ENCODE measurements at regions of chr3 and their contacts with region 1.

Region 1: GRCh38 chr3:40452876-40453730 is 4.0 kb upstream of the RPL14 start:
- DNase-seq: peak; percentile 99 to 100 (median 99)
- ATAC-seq: peak; percentile 95
- H3K4me3 ChIP-seq: peak overlapping the region; percentile 57
- H3K27ac ChIP-seq: peak overlapping the region; percentile 86
- H3K4me1 ChIP-seq: peaks cover 8 to 13% of the 10 kb centered on the region in 2 experiments; a peak in 4 of 5 replicates
- H3K27me3 ChIP-seq: no peaks in the 10 kb centered on the region
- CTCF ChIP-seq: peak in 2 of 3 experiments; percentile 9 to 33; a peak in 2 of 6 replicates
- EP300 ChIP-seq: no peak; the same call in 1 of the 2 replicates
- POLR2A ChIP-seq: peak; percentile 95
- RAD21 ChIP-seq: peak; percentile 39 to 55

Region 2: GRCh38 chr3:39383045-39383880 is 1069.8 kb before region 1 on chr3 and contains the start of gene SLC25A38:
- CTCF ChIA-PET with region 1: no interaction called
- POLR2A ChIA-PET with region 1: no interaction called
- in situ Hi-C with region 1: no loop called
- intact Hi-C with region 1: loop called (anchors 10 kb)
- DNase-seq: peak; percentile 82 to 94 (median 88)
- ATAC-seq: peak; percentile 88
- H3K4me3 ChIP-seq: peak within 1 kb of the TSS; percentile 69
- H3K27ac ChIP-seq: peak within 1 kb of the TSS; percentile 85
- H3K4me1 ChIP-seq: peaks cover 39 to 50% of the 10 kb centered on the region in 2 experiments
- H3K27me3 ChIP-seq: peaks cover 3 to 4% of the 10 kb centered on the region in 2 experiments; a peak in 3 of 5 replicates
- CTCF ChIP-seq: peak; percentile 61 to 64 (median 61)
- EP300 ChIP-seq: peak; percentile 35; the same call in 1 of the 2 replicates
- POLR2A ChIP-seq: peak; percentile 78
- RAD21 ChIP-seq: peak; percentile 43 to 45; a peak in 2 of 4 replicates
- polyA plus RNA-seq, gene SLC25A38: 13.5 to 16.5 TPM

Region 3: GRCh38 chr3:39406368-39407258 is 1046.5 kb before region 1 on chr3 and contains the start of gene RPSA:
- CTCF ChIA-PET with region 1: no interaction called
- POLR2A ChIA-PET with region 1: no interaction called
- in situ Hi-C with region 1: loop called (anchors 25 kb)
- intact Hi-C with region 1: no loop called
- DNase-seq: peak; percentile 90 to 99 (median 94)
- ATAC-seq: peak; percentile 92
- H3K4me3 ChIP-seq: peak within 1 kb of the TSS; percentile 61
- H3K27ac ChIP-seq: peak within 1 kb of the TSS; percentile 91
- H3K4me1 ChIP-seq: peaks cover 18 to 29% of the 10 kb centered on the region in 2 experiments; a peak in 4 of 5 replicates
- H3K27me3 ChIP-seq: no peaks in the 10 kb centered on the region
- CTCF ChIP-seq: peak; percentile 48 to 88 (median 84)
- EP300 ChIP-seq: peak; percentile 27
- POLR2A ChIP-seq: peak; percentile 100
- RAD21 ChIP-seq: peak; percentile 51 to 71
- polyA plus RNA-seq, gene RPSA: 2,672 to 2,730 TPM

Region 4: GRCh38 chr3:39911465-39912309 is 541.4 kb before region 1 on chr3:
- CTCF ChIA-PET with region 1: no interaction called
- POLR2A ChIA-PET with region 1: no interaction called
- in situ Hi-C with region 1: no loop called
- intact Hi-C with region 1: no loop called
- DNase-seq: no peak
- ATAC-seq: peak; percentile 48; the same call in 2 of the 3 replicates
- H3K4me3 ChIP-seq: no peak overlapping the region
- H3K27ac ChIP-seq: no peak overlapping the region
- H3K4me1 ChIP-seq: no peaks in the 10 kb centered on the region
- H3K27me3 ChIP-seq: no peaks in the 10 kb centered on the region
- CTCF ChIP-seq: no peak
- EP300 ChIP-seq: no peak
- POLR2A ChIP-seq: no peak
- RAD21 ChIP-seq: no peak

Region 5: DNA sequence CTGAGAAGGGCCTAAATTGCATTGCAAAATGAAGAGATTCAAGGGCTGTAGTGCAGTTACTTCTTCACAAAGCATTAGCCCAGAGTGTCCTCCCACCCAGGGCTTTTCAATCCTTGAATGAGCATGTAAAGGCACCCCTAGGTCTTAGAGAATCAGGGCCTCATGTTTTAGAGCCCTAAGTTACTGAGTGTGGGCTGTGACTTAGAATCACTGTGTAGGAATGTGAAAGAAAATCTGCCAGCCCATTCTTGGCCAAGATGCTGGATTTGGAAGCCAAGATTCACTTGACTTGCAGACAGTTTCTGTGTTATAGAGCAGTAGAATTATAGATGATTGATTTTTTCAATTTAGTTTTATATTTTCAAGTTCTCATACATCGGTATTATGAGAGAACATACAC is 490.5 kb before region 1 on chr3:
- CTCF ChIA-PET with region 1: no interaction called
- POLR2A ChIA-PET with region 1: no interaction called
- in situ Hi-C with region 1: no loop called
- intact Hi-C with region 1: no loop called
- DNase-seq: no peak
- ATAC-seq: no peak
- H3K4me3 ChIP-seq: no peak overlapping the region
- H3K27ac ChIP-seq: no peak overlapping the region
- H3K4me1 ChIP-seq: no peaks in the 10 kb centered on the region
- H3K27me3 ChIP-seq: no peaks in the 10 kb centered on the region
- CTCF ChIP-seq: no peak
- EP300 ChIP-seq: no peak
- POLR2A ChIP-seq: no peak
- RAD21 ChIP-seq: no peak

Region 6: GRCh38 chr3:40337136-40338108 is 115.7 kb before region 1 on chr3:
- CTCF ChIA-PET with region 1: no interaction called
- POLR2A ChIA-PET with region 1: interaction called, 11 read pairs
- in situ Hi-C with region 1: no loop called
- intact Hi-C with region 1: no loop called
- DNase-seq: peak; percentile 37 to 61 (median 51)
- ATAC-seq: peak; percentile 91
- H3K4me3 ChIP-seq: no peak overlapping the region
- H3K27ac ChIP-seq: peak overlapping the region; percentile 61
- H3K4me1 ChIP-seq: peaks cover 5 to 21% of the 10 kb centered on the region in 2 experiments; a peak in 4 of 5 replicates
- H3K27me3 ChIP-seq: no peaks in the 10 kb centered on the region
- CTCF ChIP-seq: no peak
- EP300 ChIP-seq: peak; percentile 45; the same call in 1 of the 2 replicates
- POLR2A ChIP-seq: no peak
- RAD21 ChIP-seq: 0 out of 4 replicates have a peak, but pooled peaks of 1 of the 2 experiments have one; percentile 9

Region 7: DNA sequence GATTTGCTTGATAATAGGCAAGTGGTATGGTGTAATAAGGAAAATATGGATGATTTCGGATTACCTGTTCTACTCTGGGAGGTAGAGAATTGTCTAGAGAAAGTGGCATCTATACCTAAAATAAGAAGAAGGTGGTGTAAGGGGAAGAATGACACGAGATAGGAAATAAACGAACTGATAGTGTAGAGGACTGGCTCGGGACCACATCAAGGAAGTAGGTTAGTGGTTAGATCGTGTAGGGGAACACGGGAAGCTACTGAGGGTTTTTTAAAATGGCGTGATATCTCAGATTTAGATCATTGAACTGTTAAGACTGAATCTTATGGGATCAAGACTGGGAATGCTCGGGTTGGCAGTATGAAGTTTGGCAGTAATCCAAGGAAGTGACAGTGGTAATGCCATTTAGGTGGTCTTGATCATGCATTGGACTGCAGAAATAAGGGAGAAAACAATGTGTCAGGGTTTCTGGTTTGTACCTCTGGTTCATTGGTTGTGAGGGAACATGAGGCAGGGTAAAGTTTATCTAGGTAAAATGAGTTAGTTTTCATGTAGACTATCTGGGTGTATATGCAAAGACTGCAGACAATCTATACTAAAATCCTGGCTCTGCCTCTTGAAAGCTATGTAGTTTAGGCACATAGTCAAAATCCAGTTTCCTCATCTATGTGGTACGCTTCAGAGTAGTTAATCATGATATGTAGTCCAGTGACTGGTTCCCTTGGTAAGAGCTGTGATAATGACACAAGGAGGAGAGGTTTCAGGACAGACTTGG is 11.4 kb after region 1 on chr3:
- CTCF ChIA-PET with region 1: no interaction called
- POLR2A ChIA-PET with region 1: interaction called, 37 read pairs
- in situ Hi-C with region 1: no loop called
- intact Hi-C with region 1: no loop called
- DNase-seq: peak in 1 of 4 experiments; percentile 47
- ATAC-seq: peak; percentile 51
- H3K4me3 ChIP-seq: no peak overlapping the region
- H3K27ac ChIP-seq: peak overlapping the region; percentile 2; the same call in 2 of the 3 replicates
- H3K4me1 ChIP-seq: peaks cover 6 to 7% of the 10 kb centered on the region in 2 experiments; a peak in 3 of 5 replicates
- H3K27me3 ChIP-seq: no peaks in the 10 kb centered on the region
- CTCF ChIP-seq: no peak
- EP300 ChIP-seq: no peak
- POLR2A ChIP-seq: peak; percentile 78
- RAD21 ChIP-seq: no peak

Region 8: DNA sequence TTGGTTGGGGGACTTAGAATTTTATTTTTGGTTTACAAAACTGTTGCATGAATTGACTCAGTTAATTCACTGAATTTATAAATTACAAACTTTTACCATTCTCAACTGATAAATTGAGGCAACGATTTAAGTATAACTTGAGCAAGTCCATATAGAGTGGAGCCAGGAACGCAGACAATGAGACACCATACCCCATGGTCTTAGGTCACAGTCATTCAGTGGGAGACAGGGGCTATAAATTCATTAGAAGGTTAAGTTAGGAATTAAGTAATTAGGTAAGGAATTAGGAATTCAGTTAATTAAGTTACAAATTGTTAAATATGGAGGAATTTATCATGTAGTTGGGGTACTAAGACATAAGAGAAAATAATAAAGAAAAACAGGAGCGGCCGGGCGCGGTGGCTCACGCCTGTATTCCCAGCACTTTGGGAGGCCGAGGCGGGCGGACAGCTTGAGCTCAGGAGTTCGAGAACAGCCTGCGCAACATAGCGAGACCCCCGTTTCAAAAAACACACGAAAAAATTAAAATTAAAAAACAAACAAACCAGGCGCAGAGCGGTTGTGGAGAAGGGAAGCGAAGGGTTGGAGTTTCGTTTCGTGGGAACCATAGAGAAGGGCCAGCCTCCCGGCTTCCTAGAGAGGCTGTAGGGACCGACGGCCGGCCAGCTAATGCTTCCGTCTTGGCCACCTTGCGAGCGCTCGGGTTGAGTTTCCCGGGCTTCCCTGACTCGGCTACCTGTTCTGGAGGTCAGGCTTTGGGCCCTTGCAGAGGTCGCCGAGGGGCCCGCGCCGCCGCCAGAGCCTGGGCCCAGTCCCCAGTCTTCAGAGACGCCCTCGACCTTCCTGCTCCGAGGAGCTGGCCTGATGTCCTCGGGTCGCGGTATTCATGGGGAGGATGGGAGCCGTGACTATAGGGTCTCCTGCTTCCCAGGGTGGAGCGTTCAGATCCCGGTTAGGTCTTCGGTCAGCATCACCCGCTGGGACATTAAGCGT is 23.7 kb after region 1 on chr3 and contains the start of gene ZNF619:
- CTCF ChIA-PET with region 1: no interaction called
- POLR2A ChIA-PET with region 1: interaction called, 19 read pairs
- in situ Hi-C with region 1: no loop called
- intact Hi-C with region 1: loop called (anchors 2 kb)
- DNase-seq: peak; percentile 86 to 88 (median 87)
- ATAC-seq: peak; percentile 89
- H3K4me3 ChIP-seq: peak within 1 kb of the TSS; percentile 66
- H3K27ac ChIP-seq: peak within 1 kb of the TSS; percentile 78
- H3K4me1 ChIP-seq: peaks cover 4 to 5% of the 10 kb centered on the region in 2 experiments; a peak in 3 of 5 replicates
- H3K27me3 ChIP-seq: no peaks in the 10 kb centered on the region
- CTCF ChIP-seq: no peak
- EP300 ChIP-seq: no peak
- POLR2A ChIP-seq: peak; percentile 87
- RAD21 ChIP-seq: no peak
- polyA plus RNA-seq, gene ZNF619: 1.3 to 1.5 TPM

Region 9: GRCh38 chr3:40524568-40525285 is 71.6 kb after region 1 on chr3 and contains the start of gene ZNF621:
- CTCF ChIA-PET with region 1: no interaction called
- POLR2A ChIA-PET with region 1: interaction called, 4 read pairs
- in situ Hi-C with region 1: no loop called
- intact Hi-C with region 1: loop called (anchors 2 kb)
- DNase-seq: peak; percentile 95 to 98 (median 98)
- ATAC-seq: peak; percentile 99
- H3K4me3 ChIP-seq: peak within 1 kb of the TSS; percentile 87
- H3K27ac ChIP-seq: peak within 1 kb of the TSS; percentile 88
- H3K4me1 ChIP-seq: peaks cover 9 to 12% of the 10 kb centered on the region in 2 experiments; a peak in 4 of 5 replicates
- H3K27me3 ChIP-seq: no peaks in the 10 kb centered on the region
- CTCF ChIP-seq: peak in 1 of 3 experiments; percentile 16; a peak in 2 of 6 replicates
- EP300 ChIP-seq: peak; percentile 5; the same call in 1 of the 2 replicates
- POLR2A ChIP-seq: peak; percentile 98
- RAD21 ChIP-seq: peak in 1 of 2 experiments; percentile 44; a peak in 2 of 4 replicates
- polyA plus RNA-seq, gene ZNF621: 4.7 to 7.3 TPM

Region 10: GRCh38 chr3:40660554-40660953 is 207.5 kb after region 1 on chr3:
- CTCF ChIA-PET with region 1: no interaction called
- POLR2A ChIA-PET with region 1: no interaction called
- in situ Hi-C with region 1: no loop called
- intact Hi-C with region 1: no loop called
- DNase-seq: no peak
- ATAC-seq: no peak
- H3K4me3 ChIP-seq: no peak overlapping the region
- H3K27ac ChIP-seq: no peak overlapping the region
- H3K4me1 ChIP-seq: no peaks in the 10 kb centered on the region
- H3K27me3 ChIP-seq: no peaks in the 10 kb centered on the region
- CTCF ChIP-seq: no peak
- EP300 ChIP-seq: no peak
- POLR2A ChIP-seq: no peak
- RAD21 ChIP-seq: no peak

Region 11: GRCh38 chr3:40985194-40985593 is 532.1 kb after region 1 on chr3:
- CTCF ChIA-PET with region 1: no interaction called
- POLR2A ChIA-PET with region 1: no interaction called
- in situ Hi-C with region 1: no loop called
- intact Hi-C with region 1: no loop called
- DNase-seq: peak in 1 of 4 experiments; percentile 8
- ATAC-seq: no peak
- H3K4me3 ChIP-seq: no peak overlapping the region
- H3K27ac ChIP-seq: no peak overlapping the region
- H3K4me1 ChIP-seq: no peaks in the 10 kb centered on the region
- H3K27me3 ChIP-seq: no peaks in the 10 kb centered on the region
- CTCF ChIP-seq: no peak
- EP300 ChIP-seq: no peak
- POLR2A ChIP-seq: no peak
- RAD21 ChIP-seq: no peak